ENCODE measurements at regions of chr9 and their contacts with region 1.

Region 1: GRCh38 chr9:82532504-82533180 is 530.3 kb downstream of the RASEF start:
- DNase-seq: peak; percentile 29
- H3K4me3 Mint-ChIP-seq: no peak overlapping the region
- H3K27ac Mint-ChIP-seq: no peak overlapping the region
- H3K4me1 Mint-ChIP-seq: no peaks in the 10 kb centered on the region
- H3K27me3 Mint-ChIP-seq: no peaks in the 10 kb centered on the region
- CTCF ChIP-seq: peak; percentile 37

Region 2: DNA sequence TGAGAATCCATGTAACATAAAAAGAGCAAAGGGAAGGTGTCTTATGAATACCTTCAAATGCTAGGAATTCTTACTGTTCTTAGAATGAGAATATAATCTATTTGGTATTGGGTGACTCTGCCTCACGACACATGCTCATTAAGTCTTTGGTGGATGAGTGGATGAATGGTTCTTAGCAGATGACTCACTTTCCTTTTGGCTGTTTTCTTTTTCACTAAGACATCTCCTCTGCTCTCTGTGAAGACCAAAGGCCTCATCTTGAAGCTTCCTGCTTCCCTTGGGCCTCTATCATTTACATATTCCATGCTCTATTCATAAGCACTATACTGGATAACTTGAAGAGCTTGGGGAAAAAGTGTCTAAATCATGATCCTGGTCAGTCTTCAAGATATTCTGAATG is 76.0 kb before region 1 on chr9:
- CTCF ChIA-PET with region 1: no interaction called
- POLR2A ChIA-PET with region 1: no interaction called
- intact Hi-C with region 1: no loop called
- DNase-seq: peak; percentile 15
- H3K4me3 Mint-ChIP-seq: no peak overlapping the region
- H3K27ac Mint-ChIP-seq: no peak overlapping the region
- H3K4me1 Mint-ChIP-seq: peaks cover 6% of the 10 kb centered on the region
- H3K27me3 Mint-ChIP-seq: no peaks in the 10 kb centered on the region
- CTCF ChIP-seq: no peak

Region 3: DNA sequence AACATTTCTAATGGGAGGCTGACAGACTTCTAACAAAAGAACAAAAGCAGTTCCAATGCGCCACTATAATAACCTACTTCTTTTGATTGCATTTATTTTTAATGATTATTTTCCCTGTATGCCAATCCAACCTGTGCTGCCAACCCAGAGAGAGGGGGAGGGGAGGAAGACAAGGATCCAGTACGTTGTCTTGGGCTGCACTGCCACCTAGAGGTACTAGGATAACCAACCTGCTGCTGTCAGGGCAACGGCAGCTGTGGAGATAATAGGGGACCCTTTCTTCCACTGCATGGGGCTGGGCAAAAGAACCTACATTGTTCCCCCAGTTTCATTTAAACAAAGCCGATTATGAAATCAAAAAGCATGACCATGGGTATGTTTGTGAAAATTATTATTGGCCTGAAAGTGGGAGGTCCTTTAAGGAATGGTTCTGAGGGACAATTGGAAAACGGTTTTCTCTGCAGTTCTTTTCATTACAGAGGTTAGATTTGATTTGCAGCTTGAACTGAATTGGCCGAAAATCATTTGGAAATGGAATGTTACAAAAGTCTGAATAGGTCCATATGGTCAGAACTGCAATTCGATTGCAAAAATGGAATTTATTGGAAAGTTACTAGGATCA is 429.0 kb after region 1 on chr9:
- CTCF ChIA-PET with region 1: interaction called, 5 read pairs
- POLR2A ChIA-PET with region 1: no interaction called
- intact Hi-C with region 1: loop called (anchors 2 kb)
- DNase-seq: peak; percentile 90
- H3K4me3 Mint-ChIP-seq: no peak overlapping the region
- H3K27ac Mint-ChIP-seq: no peak overlapping the region
- H3K4me1 Mint-ChIP-seq: no peaks in the 10 kb centered on the region
- H3K27me3 Mint-ChIP-seq: no peaks in the 10 kb centered on the region
- CTCF ChIP-seq: peak; percentile 74